Spleen (tissue), 13 donors: ENCODE measurements at regions of chr6 and their contacts with region 1.

Region 1: GRCh38 chr6:52284460-52285176 is at the start of gene MCM3:
- DNase-seq: peak; percentile 97
- H3K4me3 ChIP-seq: peak within 1 kb of the TSS; percentile 61 to 95 (median 86)
- H3K27ac ChIP-seq: peak within 1 kb of the TSS; percentile 54 to 87 (median 80)
- H3K4me1 ChIP-seq: peaks cover 17 to 59% (median 34%) of the 10 kb centered on the region in 6 donors
- H3K27me3 ChIP-seq: no peaks in the 10 kb centered on the region
- CTCF ChIP-seq: peak in 9 of 11 experiments; percentile 5 to 69 (median 32)
- POLR2A ChIP-seq: no peak
- total RNA-seq, gene MCM3: 32.3 to 48.6 (median 36.8) TPM

Region 2: GRCh38 chr6:52399511-52400312 is 115.1 kb after region 1 on chr6:
- intact Hi-C with region 1: loop called (anchors 5 kb)
- DNase-seq: no peak
- H3K4me3 ChIP-seq: no peak overlapping the region
- H3K27ac ChIP-seq: peak overlapping the region in 1 of 8 donors; percentile 13
- H3K4me1 ChIP-seq: peaks cover 0 to 42% (median 23%) of the 10 kb centered on the region in 6 donors
- H3K27me3 ChIP-seq: no peaks in the 10 kb centered on the region
- CTCF ChIP-seq: peak; percentile 45 to 83 (median 73)
- POLR2A ChIP-seq: no peak

Region 3: GRCh38 chr6:52407467-52407866 is 122.8 kb after region 1 on chr6:
- intact Hi-C with region 1: loop called (anchors 5 kb)
- DNase-seq: no peak
- H3K4me3 ChIP-seq: no peak overlapping the region
- H3K27ac ChIP-seq: no peak overlapping the region
- H3K4me1 ChIP-seq: no peaks in the 10 kb centered on the region
- H3K27me3 ChIP-seq: no peaks in the 10 kb centered on the region
- CTCF ChIP-seq: peak in 6 of 11 experiments; percentile 30 to 46 (median 42)
- POLR2A ChIP-seq: no peak

Region 4: DNA sequence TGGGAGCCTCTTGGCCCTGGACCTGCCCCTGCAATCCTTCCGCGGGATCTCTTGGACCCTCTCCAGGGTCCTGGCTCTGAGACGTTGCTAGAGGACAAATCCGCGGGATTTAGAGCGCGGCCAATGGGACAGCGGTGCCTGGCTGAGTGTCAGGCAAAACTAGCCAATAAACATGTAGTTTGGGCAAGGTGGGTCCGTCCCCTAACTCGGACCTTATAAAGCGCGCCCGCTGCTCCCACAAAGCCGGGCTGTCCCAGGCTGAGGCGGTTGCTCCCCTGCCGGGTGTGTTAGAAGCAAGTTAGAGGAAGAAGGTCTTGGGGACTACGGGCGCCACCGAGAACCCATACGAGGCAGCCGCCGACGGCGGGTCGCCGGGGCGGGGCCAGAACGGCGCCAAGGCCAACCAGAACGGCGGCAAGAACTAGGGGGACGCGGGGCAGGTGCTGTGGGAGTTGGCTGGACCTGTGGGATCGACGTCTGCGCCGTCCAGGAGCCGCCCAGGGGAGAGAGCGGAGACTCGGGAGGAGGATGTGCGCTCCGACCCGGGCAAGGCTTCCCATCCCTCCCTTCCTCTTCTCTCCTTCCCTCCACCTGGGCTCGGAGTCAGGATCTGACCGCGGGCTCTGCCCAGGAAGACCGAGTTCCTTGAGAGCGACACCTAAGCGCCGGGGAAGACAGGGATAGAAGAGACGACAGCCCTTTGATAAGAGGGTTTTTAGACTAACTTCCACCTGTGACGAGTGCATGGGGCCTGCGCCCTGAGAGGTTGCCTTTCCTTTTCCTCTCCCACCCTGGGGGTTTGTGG is 379.8 kb after region 1 on chr6:
- intact Hi-C with region 1: loop called (anchors 10 kb)
- DNase-seq: peak; percentile 91
- H3K4me3 ChIP-seq: peak overlapping the region; percentile 37 to 76 (median 63)
- H3K27ac ChIP-seq: peak overlapping the region; percentile 20 to 81 (median 71)
- H3K4me1 ChIP-seq: peaks cover 8 to 53% (median 37%) of the 10 kb centered on the region in 6 donors
- H3K27me3 ChIP-seq: peaks cover 0 to 15% (median 0%) of the 10 kb centered on the region in 7 donors
- CTCF ChIP-seq: no peak
- POLR2A ChIP-seq: peak in 2 of 3 donors; percentile 38 to 85